ENCODE measurements at regions of chr11 and their contacts with region 1.

Region 1: GRCh38 chr11:36041988-36042611 is 98.2 kb downstream of the LDLRAD3 start:
- DNase-seq: peak; percentile 47
- H3K4me3 ChIP-seq: no peak overlapping the region
- H3K27ac ChIP-seq: no peak overlapping the region
- H3K4me1 ChIP-seq: no peaks in the 10 kb centered on the region
- H3K27me3 ChIP-seq: no peaks in the 10 kb centered on the region
- CTCF ChIP-seq: peak; percentile 87

Region 2: GRCh38 chr11:36126678-36127077 is 84.6 kb after region 1 on chr11:
- CTCF ChIA-PET with region 1: interaction called, 10 read pairs
- POLR2A ChIA-PET with region 1: no interaction called
- intact Hi-C with region 1: loop called (anchors 5 kb)
- DNase-seq: peak; percentile 56
- H3K4me3 ChIP-seq: no peak overlapping the region
- H3K27ac ChIP-seq: no peak overlapping the region
- H3K4me1 ChIP-seq: peaks cover 8% of the 10 kb centered on the region
- H3K27me3 ChIP-seq: no peaks in the 10 kb centered on the region
- CTCF ChIP-seq: no peak

Region 3: GRCh38 chr11:36131721-36132397 is 89.8 kb after region 1 on chr11:
- CTCF ChIA-PET with region 1: interaction called, 10 read pairs
- POLR2A ChIA-PET with region 1: no interaction called
- intact Hi-C with region 1: loop called (anchors 5 kb)
- DNase-seq: peak; percentile 77
- H3K4me3 ChIP-seq: no peak overlapping the region
- H3K27ac ChIP-seq: no peak overlapping the region
- H3K4me1 ChIP-seq: peaks cover 1% of the 10 kb centered on the region
- H3K27me3 ChIP-seq: no peaks in the 10 kb centered on the region
- CTCF ChIP-seq: peak; percentile 99

Region 4: DNA sequence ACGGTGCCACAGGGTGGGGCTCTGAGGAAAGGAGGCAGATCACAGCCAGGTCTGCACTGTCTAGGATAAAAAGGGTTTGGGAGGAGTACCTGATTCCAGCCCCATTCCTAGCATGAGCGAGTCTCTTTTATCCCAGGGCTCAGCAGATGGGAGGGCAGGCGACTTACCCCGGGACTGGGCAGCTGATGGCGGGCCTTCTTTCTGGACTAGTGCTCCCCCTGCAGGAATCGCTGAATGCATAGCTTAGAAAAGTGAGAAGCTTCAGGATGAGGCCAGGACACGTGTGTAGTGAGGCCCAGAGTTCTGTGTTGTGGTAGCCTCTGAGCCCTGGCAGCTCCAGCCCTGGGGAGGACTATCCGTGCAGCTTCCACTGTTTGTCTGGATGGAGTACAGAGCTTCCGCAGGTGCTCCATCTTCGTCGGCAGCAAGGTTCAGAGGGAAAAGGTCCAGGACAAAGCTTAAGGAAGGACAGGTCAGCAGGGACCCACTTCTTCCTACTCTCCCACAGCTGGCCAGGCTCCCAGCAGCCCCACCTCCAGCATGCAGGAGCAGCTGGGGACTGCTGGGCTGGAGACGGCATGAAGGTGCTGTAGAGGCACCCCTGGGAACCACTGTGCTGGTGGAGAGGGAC is 216.7 kb after region 1 on chr11:
- CTCF ChIA-PET with region 1: interaction called, 23 read pairs
- POLR2A ChIA-PET with region 1: no interaction called
- intact Hi-C with region 1: loop called (anchors 5 kb)
- DNase-seq: peak; percentile 93
- H3K4me3 ChIP-seq: no peak overlapping the region
- H3K27ac ChIP-seq: no peak overlapping the region
- H3K4me1 ChIP-seq: no peaks in the 10 kb centered on the region
- H3K27me3 ChIP-seq: peaks cover 20% of the 10 kb centered on the region
- CTCF ChIP-seq: peak; percentile 99